ENCODE measurements at regions of chr19 and their contacts with region 1.

Region 1: GRCh38 chr19:31054430-31054829 is 294.8 kb downstream of the TSHZ3 start:
- DNase-seq: peak; percentile 56
- H3K4me3 ChIP-seq: no peak overlapping the region
- H3K27ac ChIP-seq: no peak overlapping the region
- H3K27me3 ChIP-seq: no peaks in the 10 kb centered on the region
- CTCF ChIP-seq: peak; percentile 88

Region 2: DNA sequence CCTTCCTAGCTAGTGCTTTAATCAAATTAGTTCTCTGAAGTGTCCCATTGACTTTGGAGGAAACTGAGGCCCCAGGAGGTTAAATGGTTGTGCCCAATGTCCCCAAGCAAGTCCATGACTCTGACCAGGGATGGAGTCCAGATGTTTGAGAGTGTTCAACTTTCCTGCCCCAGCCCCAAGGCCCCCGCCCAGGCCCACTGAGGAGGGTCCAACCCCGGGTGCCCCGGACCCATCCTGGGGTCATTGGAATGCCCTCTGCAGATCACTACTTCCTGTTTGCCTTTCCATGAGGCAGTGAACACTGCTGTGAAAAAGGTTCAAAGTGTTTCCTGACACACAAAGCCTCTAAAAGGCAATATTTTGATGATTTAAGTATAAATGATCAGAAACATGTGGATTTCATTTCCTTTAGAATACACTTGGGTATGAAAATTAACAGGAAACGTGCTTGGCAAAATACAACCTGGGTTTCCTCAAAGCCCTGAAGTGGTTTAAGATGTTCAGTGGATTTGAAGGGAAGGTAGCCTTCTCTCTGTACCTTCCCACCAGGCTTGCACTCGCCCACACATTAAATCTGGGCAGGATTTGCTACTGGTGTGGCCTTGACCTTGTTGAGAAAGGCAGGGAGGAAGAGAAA is 40.9 kb before region 1 on chr19:
- CTCF ChIA-PET with region 1: no interaction called
- POLR2A ChIA-PET with region 1: no interaction called
- DNase-seq: no peak
- H3K4me3 ChIP-seq: no peak overlapping the region
- H3K27ac ChIP-seq: no peak overlapping the region
- H3K27me3 ChIP-seq: no peaks in the 10 kb centered on the region
- CTCF ChIP-seq: no peak

Region 3: GRCh38 chr19:31064491-31064890 is 10.1 kb after region 1 on chr19:
- CTCF ChIA-PET with region 1: interaction called, 13 read pairs
- POLR2A ChIA-PET with region 1: no interaction called
- DNase-seq: no peak
- H3K4me3 ChIP-seq: no peak overlapping the region
- H3K27ac ChIP-seq: no peak overlapping the region
- H3K27me3 ChIP-seq: no peaks in the 10 kb centered on the region
- CTCF ChIP-seq: no peak

Region 4: GRCh38 chr19:31316201-31316951 is 261.9 kb after region 1 on chr19:
- CTCF ChIA-PET with region 1: interaction called, 12 read pairs
- POLR2A ChIA-PET with region 1: no interaction called
- DNase-seq: no peak
- H3K4me3 ChIP-seq: peak overlapping the region; percentile 15
- H3K27ac ChIP-seq: peak overlapping the region; percentile 65
- H3K27me3 ChIP-seq: no peaks in the 10 kb centered on the region
- CTCF ChIP-seq: no peak

Region 5: GRCh38 chr19:31338069-31338776 is 283.8 kb after region 1 on chr19:
- CTCF ChIA-PET with region 1: interaction called, 31 read pairs
- POLR2A ChIA-PET with region 1: interaction called, 3 read pairs
- DNase-seq: no peak
- H3K4me3 ChIP-seq: no peak overlapping the region; the same call in 1 of the 2 replicates
- H3K27ac ChIP-seq: peak overlapping the region; percentile 83
- H3K27me3 ChIP-seq: no peaks in the 10 kb centered on the region
- CTCF ChIP-seq: peak; percentile 85

Region 6: DNA sequence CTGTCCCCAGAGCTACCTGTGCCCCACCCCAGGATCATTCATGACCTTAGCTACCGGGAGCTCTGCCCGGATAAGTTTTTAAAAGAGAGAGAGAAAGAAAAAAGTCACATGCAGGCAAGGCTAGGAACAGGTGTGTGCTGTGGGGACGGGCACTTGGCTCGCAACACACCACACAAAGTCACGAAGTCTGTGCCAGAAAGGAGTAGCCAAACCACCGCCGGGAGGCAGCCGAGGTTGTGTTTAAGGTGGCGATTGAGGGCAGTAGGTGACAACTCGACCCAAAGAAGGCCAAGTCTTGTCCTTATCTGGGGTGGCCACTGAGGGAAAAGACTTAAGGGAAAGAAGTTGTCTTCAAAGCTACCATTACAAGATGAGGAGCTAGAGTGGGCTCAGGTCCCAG is 299.4 kb after region 1 on chr19:
- CTCF ChIA-PET with region 1: interaction called, 31 read pairs
- POLR2A ChIA-PET with region 1: no interaction called
- DNase-seq: no peak
- H3K4me3 ChIP-seq: no peak overlapping the region
- H3K27ac ChIP-seq: no peak overlapping the region
- H3K27me3 ChIP-seq: no peaks in the 10 kb centered on the region
- CTCF ChIP-seq: no peak

Region 7: GRCh38 chr19:32224371-32225244 is 1170.2 kb after region 1 on chr19:
- CTCF ChIA-PET with region 1: interaction called, 25 read pairs
- POLR2A ChIA-PET with region 1: no interaction called
- DNase-seq: no peak
- H3K4me3 ChIP-seq: no peak overlapping the region
- H3K27ac ChIP-seq: no peak overlapping the region
- H3K27me3 ChIP-seq: peaks cover 7% of the 10 kb centered on the region
- CTCF ChIP-seq: peak; percentile 87

Measured in AG04450 (cell line).